Keratinocyte (primary cell): ENCODE measurements at regions of chr10 and their contacts with region 1.

Region 1: DNA sequence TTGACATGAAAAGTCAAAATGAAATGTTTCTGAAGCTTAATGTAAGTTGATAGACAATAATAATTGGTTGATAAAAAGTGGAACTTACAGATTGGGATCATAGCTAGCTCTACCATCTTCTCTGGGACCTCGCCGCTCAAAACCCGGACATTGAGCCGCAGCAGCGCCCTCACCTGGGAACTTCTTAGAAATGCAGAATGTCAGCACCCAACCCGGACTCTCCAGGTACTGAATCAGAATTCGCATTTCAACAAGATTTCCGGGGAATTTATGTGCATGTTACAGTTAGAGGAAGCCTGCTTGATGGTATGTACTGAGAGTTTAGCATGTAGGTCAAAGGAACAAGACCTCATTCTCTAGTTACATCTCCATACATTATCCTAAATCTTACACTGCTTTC is 36.7 kb upstream of the ABLIM1 start:
- DNase-seq: no peak
- H3K4me3 ChIP-seq: no peak overlapping the region
- H3K27ac ChIP-seq: no peak overlapping the region
- H3K4me1 ChIP-seq: peaks cover 17% of the 10 kb centered on the region
- H3K27me3 ChIP-seq: no peaks in the 10 kb centered on the region
- CTCF ChIP-seq: peak; percentile 65 to 73 (median 72)

Region 2: DNA sequence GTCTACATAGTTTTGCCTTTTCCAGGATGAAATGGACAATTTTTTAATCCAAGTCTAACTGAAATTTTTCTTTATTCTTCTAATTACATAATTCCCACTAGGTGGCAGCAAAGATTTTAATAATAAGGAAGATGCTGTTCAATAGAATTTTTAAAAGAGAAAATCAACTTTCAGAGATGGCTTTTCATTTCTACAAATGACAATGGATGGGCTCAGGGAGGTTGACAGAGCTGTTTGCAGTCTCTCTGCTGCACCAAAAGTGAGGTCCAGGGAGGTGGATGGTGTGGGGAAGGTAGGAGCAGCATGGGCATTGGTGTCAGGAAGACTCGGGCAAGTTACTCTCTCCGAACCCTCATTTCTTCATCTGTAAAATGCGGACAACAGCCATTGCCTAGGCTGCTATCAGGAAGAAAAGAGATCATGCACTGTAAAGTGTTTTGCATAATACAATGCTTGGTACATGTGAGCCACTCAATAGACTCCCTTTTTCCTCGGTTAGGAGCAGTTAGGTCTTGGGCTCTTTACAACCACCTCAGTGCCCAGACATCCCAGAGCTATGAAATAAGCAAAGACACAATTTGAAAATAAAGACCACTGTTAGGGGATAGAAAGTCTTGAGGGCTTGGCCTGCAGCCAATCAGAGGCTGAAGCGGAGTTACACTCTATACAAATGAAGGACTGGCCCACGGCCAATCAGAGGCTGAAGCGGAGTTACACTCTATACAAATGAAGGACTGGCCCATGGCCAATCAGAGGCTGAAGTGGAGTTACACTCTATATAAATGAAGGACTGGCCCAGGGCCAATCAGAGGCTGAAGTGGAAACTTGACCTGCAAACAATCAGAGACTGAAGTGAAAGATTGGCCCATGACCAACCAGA is 143.8 kb before region 1 on chr10:
- dilution Hi-C with region 1: loop called (anchors 10 kb)
- DNase-seq: no peak
- H3K4me3 ChIP-seq: no peak overlapping the region
- H3K27ac ChIP-seq: no peak overlapping the region
- H3K4me1 ChIP-seq: no peaks in the 10 kb centered on the region
- H3K27me3 ChIP-seq: no peaks in the 10 kb centered on the region
- CTCF ChIP-seq: peak in 1 of 3 experiments; percentile 30

Region 3: DNA sequence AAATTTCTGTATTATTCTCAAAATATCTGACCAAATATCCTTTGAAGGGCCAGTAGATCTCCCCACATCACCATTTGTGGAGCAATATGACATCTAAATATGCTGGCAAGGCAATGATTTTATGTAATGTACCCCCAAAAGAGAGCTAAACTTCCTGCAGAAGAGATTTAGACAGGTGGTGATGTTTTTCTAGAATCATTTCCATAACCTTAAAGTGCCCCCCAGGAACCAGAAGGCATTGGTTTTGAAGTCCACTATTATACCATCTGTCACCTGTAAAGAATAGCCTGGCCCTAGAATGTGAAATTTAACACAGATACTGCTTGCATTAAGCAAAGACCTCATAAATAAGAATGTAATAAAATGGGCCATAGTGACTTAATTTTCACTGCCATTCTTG is 41.2 kb after region 1 on chr10:
- dilution Hi-C with region 1: no loop called
- DNase-seq: no peak
- H3K4me3 ChIP-seq: no peak overlapping the region
- H3K27ac ChIP-seq: no peak overlapping the region
- H3K4me1 ChIP-seq: no peaks in the 10 kb centered on the region
- H3K27me3 ChIP-seq: no peaks in the 10 kb centered on the region
- CTCF ChIP-seq: no peak